Motor neuron (in vitro differentiated cells): ENCODE measurements at regions of chr12 and their contacts with region 1.

Region 1: GRCh38 chr12:77324763-77325468 is 259.5 kb upstream of the E2F7 start:
- ATAC-seq: peak; percentile 86 to 99 (median 90)
- H3K4me3 ChIP-seq: peak overlapping the region; percentile 54 to 89 (median 77)
- H3K27ac ChIP-seq: peak overlapping the region; percentile 75 to 81
- H3K4me1 ChIP-seq: peaks cover 25 to 37% of the 10 kb centered on the region in 2 donors

Region 2: DNA sequence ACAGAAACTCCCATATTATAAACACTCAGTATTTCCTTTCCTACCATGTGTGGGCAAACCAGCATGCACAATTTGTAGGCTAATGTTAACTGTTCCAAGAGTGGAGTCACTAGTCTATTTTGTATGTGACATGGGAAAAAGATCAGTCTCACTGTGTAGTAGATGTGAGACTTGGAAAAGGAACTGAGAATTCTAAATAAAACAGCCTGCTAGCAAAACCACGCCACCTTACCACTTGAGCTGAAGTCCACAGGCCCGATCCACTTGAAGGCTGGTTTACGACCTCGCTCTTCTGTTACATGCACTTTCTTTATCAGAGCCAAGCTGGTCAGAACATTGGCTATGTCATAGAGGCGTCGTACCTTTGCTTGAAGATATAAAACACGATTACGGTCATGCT is 282.1 kb before region 1 on chr12:
- in situ Hi-C with region 1: no loop called
- ATAC-seq: no peak
- H3K4me3 ChIP-seq: no peak overlapping the region
- H3K27ac ChIP-seq: no peak overlapping the region
- H3K4me1 ChIP-seq: peaks cover 0 to 7% of the 10 kb centered on the region in 2 donors

Region 3: GRCh38 chr12:77065361-77066204 is 259.3 kb before region 1 on chr12 and contains the start of gene E2F7:
- in situ Hi-C with region 1: loop called in 1 of 9 experiments (anchors 25 kb)
- ATAC-seq: peak; percentile 93 to 98 (median 95)
- H3K4me3 ChIP-seq: peak within 1 kb of the TSS; percentile 48 to 77 (median 58)
- H3K27ac ChIP-seq: peak within 1 kb of the TSS in 1 of 2 donors; percentile 26
- H3K4me1 ChIP-seq: peaks cover 3 to 12% of the 10 kb centered on the region in 2 donors
- total RNA-seq, gene E2F7: 0.71 to 11.1 (median 2.0) TPM

Region 4: DNA sequence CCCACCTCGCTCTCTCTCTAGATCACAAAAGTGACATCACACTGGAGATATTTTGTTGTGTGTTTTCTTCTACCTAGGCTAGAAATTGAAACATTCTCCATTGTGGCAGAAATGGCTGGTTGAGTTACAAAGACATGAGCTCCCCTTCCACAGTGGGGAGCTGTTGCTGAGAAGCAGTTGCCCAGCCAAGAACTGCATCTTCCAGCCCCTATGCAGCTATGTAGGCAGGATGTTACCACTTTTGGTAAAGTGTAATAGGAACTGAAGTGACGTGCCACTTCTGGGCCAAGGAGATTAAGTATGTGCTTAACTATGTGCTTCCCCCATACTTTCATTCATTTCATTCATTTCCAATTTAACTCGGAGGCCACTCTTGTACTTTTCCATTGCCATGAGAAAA is 120.8 kb before region 1 on chr12:
- in situ Hi-C with region 1: loop called in 1 of 9 experiments (anchors 25 kb)
- ATAC-seq: peak in 1 of 8 experiments; percentile 23
- H3K4me3 ChIP-seq: no peak overlapping the region
- H3K27ac ChIP-seq: no peak overlapping the region
- H3K4me1 ChIP-seq: no peaks in the 10 kb centered on the region